Activated T-helper 2 cell treated with anti-CD3 and anti-CD28 coated beads, Interferon-gamma antibody, Interleukin-2, Interleukin-4, amounts not matched to agents 10 μg/mL and 5 μg/mL and 100 μg/mL, durations not matched to agents 14 hours and 24 hours and 36 hours (primary cell): ENCODE measurements at regions of chr14 and their contacts with region 1.

Region 1: DNA sequence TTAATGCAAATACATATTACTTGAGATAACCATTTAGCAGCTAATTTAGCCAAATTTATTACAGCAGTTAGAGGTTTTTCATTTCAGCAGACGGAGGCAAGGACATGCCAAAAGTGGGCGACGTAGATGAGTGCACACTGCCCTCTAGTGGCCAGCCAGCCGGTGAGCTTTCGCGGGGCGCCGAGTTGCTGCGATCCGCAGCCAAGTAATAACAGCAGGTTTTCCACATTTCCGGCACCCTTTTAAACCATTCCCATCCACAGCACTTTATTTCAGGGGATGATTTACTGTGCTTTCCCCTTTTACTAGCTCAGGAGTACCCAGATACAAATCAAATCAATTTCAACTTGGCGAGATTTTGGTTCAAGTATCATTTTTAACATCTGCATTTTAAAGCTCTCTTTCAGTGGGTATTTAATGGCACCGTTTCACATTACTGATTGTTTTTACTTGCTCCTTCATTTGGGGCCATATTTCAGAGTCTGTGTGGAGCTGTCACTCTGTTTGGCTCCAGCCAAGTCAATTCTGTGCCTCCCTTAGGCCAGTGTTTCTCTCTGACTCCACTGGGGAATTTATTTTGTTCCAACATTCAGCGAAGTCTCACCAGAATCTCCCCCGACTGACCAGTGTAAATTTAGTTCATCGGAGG is 158.0 kb downstream of the EGLN3 start:
- DNase-seq: peak; percentile 60
- H3K4me3 Mint-ChIP-seq: peak overlapping the region; percentile 46
- H3K27ac Mint-ChIP-seq: no peak overlapping the region
- H3K4me1 Mint-ChIP-seq: peaks cover 24% of the 10 kb centered on the region
- H3K27me3 Mint-ChIP-seq: peaks cover 52% of the 10 kb centered on the region

Region 2: GRCh38 chr14:32576088-32576795 is 1216.6 kb before region 1 on chr14:
- intact Hi-C with region 1: loop called (anchors 5 kb)
- DNase-seq: peak; percentile 13
- H3K4me3 Mint-ChIP-seq: no peak overlapping the region
- H3K27ac Mint-ChIP-seq: no peak overlapping the region
- H3K4me1 Mint-ChIP-seq: no peaks in the 10 kb centered on the region
- H3K27me3 Mint-ChIP-seq: peaks cover 20% of the 10 kb centered on the region

Region 3: GRCh38 chr14:32702562-32702961 is 1090.3 kb before region 1 on chr14:
- intact Hi-C with region 1: loop called (anchors 10 kb)
- DNase-seq: no peak
- H3K4me3 Mint-ChIP-seq: no peak overlapping the region
- H3K27ac Mint-ChIP-seq: no peak overlapping the region
- H3K4me1 Mint-ChIP-seq: no peaks in the 10 kb centered on the region
- H3K27me3 Mint-ChIP-seq: no peaks in the 10 kb centered on the region

Region 4: GRCh38 chr14:32939254-32940065 is 853.4 kb before region 1 on chr14:
- intact Hi-C with region 1: loop called (anchors 10 kb)
- DNase-seq: no peak
- H3K4me3 Mint-ChIP-seq: peak overlapping the region; percentile 69
- H3K27ac Mint-ChIP-seq: no peak overlapping the region
- H3K4me1 Mint-ChIP-seq: peaks cover 9% of the 10 kb centered on the region
- H3K27me3 Mint-ChIP-seq: peaks cover 65% of the 10 kb centered on the region

Region 5: DNA sequence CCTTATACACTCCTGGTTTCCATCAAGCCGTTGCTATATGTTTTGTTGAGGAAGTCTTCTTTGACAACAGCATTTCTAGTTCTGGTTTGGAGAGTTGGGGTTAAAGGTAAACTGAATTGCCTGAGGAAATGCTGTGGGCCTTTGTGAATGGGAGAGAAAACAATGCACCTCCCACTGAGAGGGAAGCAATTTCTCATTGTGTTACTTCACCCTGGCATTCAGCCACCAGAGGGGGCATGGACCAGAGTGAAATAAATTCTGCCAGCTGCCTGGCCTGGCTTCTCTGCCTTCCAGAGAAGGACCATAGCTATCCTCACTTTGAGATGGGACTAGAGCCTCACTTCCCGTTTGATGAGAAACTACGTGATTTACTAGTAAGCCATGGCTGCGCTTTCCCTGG is 317.2 kb before region 1 on chr14:
- intact Hi-C with region 1: loop called (anchors 5 kb)
- DNase-seq: no peak
- H3K4me3 Mint-ChIP-seq: no peak overlapping the region
- H3K27ac Mint-ChIP-seq: no peak overlapping the region
- H3K4me1 Mint-ChIP-seq: no peaks in the 10 kb centered on the region
- H3K27me3 Mint-ChIP-seq: peaks cover 5% of the 10 kb centered on the region